Psoas muscle (tissue), 8 donors: ENCODE measurements at regions of chr5 and their contacts with region 1.

Region 1: GRCh38 chr5:6448622-6449464 is at the start of gene UBE2QL1:
- DNase-seq: peak in 1 of 2 donors; percentile 69
- ATAC-seq: peak; percentile 37 to 63 (median 57)
- H3K4me3 ChIP-seq: peak within 1 kb of the TSS; percentile 84
- H3K27ac ChIP-seq: peak within 1 kb of the TSS; percentile 91
- H3K4me1 ChIP-seq: peaks cover 32% of the 10 kb centered on the region
- H3K27me3 ChIP-seq: no peaks in the 10 kb centered on the region
- CTCF ChIP-seq: no peak
- total RNA-seq, gene UBE2QL1: 12.9 to 96.2 (median 20.6) TPM

Region 2: GRCh38 chr5:5492087-5492933 is 956.5 kb before region 1 on chr5:
- intact Hi-C with region 1: loop called in 1 of 2 experiments (anchors 10 kb)
- DNase-seq: no peak
- ATAC-seq: peak in 3 of 4 donors; percentile 37 to 58 (median 54)
- H3K4me3 ChIP-seq: no peak overlapping the region
- H3K27ac ChIP-seq: no peak overlapping the region
- H3K4me1 ChIP-seq: peaks cover 46% of the 10 kb centered on the region
- H3K27me3 ChIP-seq: no peaks in the 10 kb centered on the region
- CTCF ChIP-seq: peak; percentile 71

Region 3: GRCh38 chr5:6377905-6378765 is 70.7 kb before region 1 on chr5 and contains the start of gene MED10:
- intact Hi-C with region 1: loop called (anchors 5 to 10 kb)
- DNase-seq: peak; percentile 95 to 98
- ATAC-seq: peak; percentile 99 to 100 (median 100)
- H3K4me3 ChIP-seq: peak within 1 kb of the TSS; percentile 98
- H3K27ac ChIP-seq: peak within 1 kb of the TSS; percentile 95
- H3K4me1 ChIP-seq: peaks cover 9% of the 10 kb centered on the region
- H3K27me3 ChIP-seq: no peaks in the 10 kb centered on the region
- CTCF ChIP-seq: no peak
- total RNA-seq, gene MED10: 18.8 to 52.4 (median 26.5) TPM

Region 4: DNA sequence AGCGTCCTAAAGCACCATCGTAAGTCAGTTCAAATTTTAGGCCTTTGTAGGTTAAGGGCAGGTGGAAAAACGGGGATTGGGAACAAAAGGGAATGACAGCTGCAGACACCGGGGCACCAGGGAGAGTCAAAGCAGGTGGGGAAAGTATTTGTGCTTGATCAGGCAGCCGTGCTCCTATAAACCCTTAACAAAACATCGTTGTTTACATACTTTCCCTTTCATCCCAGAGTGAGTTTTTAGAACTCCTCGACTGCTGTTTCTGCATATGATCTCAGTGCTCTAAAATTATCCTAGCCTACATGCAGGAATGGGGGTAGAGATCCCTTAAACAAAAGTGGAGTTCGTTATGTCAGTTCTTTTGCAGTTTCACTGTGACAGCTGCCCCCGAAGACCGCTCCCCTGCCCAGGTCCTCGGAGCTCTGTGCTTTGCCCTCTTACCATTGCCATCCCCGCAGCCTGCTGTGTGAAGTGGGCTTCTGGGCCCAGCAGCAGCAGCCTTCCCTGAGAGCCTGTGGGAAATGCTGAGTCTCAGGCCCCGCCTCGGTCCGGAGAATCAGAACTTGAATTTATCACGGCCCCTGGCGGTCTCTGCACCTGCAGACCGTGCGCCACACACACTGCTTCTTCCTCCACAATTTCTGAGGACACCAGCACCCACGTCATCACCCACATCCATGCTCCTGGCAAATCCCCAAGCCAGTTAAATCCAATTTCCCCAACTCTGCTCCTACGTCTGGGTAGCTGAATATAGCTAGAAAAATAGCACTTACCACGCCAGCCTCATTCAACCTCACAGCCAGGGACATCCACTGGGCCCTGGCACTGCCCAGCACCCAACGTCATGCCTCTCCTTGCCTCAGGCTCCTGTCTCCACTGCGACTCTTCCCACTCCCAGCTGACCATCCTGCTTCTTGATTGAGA is 97.2 kb after region 1 on chr5:
- intact Hi-C with region 1: loop called (anchors 2 to 10 kb)
- DNase-seq: no peak
- ATAC-seq: peak; percentile 13 to 78 (median 60)
- H3K4me3 ChIP-seq: peak overlapping the region; percentile 7
- H3K27ac ChIP-seq: peak overlapping the region; percentile 93
- H3K4me1 ChIP-seq: peaks cover 40% of the 10 kb centered on the region
- H3K27me3 ChIP-seq: no peaks in the 10 kb centered on the region
- CTCF ChIP-seq: no peak

Region 5: DNA sequence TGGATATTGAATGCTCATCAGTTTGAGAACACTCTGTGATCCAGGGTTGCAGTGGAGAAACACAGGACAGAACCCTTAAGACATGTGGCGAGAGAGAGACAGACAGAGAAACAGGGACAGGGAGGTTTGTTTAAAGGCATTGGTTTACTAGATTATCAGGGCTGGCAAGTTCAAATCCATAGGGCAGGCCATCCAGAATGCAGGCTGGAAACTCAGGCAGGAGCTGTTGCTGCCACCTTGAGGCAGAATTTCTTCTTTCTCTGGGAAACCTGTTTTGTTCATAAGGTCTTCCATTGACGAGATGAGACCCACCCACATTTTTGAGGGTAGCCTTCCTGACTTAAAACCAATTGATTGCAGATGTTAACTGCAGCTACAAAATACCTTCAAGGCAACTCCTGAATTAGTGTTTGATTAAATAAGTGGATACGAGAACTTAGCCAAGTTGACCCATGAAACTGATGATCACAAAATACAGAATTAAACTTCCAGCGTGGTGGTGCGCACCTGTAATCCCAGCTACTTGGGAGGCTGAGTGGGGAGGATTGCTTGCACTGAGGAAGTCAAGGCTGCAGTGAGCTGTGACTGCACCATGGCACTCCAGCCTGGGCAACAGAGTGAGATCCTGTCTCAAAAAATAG is 128.1 kb after region 1 on chr5:
- intact Hi-C with region 1: loop called (anchors 5 to 10 kb)
- DNase-seq: peak in 1 of 2 donors; percentile 49
- ATAC-seq: peak; percentile 32 to 73 (median 56)
- H3K4me3 ChIP-seq: no peak overlapping the region
- H3K27ac ChIP-seq: peak overlapping the region; percentile 48
- H3K4me1 ChIP-seq: peaks cover 6% of the 10 kb centered on the region
- H3K27me3 ChIP-seq: no peaks in the 10 kb centered on the region
- CTCF ChIP-seq: peak; percentile 60

Region 6: DNA sequence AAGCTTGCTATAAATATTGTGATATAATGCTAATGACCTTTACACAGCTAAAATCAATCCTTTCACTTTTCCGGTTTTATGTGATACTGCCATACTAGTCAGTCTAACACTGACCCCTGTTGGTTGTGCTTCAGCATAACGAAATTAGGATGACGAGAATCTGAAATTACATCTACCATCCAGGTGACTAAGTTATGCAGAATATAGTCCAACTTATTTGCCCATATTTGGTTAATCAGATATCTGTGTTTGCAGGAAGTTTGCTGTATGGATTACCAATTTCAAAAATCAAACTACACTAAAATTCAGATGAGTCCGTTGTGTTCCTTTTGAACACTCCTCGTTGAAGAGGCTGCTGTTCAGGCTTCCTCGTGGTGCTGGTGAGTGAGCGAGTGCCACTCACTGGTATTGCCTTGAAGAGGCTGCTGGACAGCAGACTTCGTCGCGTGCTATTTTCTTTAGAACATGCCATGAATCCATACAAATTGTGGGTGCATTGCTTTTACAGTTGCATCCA is 296.9 kb after region 1 on chr5:
- intact Hi-C with region 1: loop called in 1 of 2 experiments (anchors 10 kb)
- DNase-seq: no peak
- ATAC-seq: peak; percentile 54 to 88 (median 75)
- H3K4me3 ChIP-seq: no peak overlapping the region
- H3K27ac ChIP-seq: peak overlapping the region; percentile 14
- H3K4me1 ChIP-seq: peaks cover 6% of the 10 kb centered on the region
- H3K27me3 ChIP-seq: no peaks in the 10 kb centered on the region
- CTCF ChIP-seq: peak; percentile 76